Activated naive CD4-positive, alpha-beta T cell treated with anti-CD3 and anti-CD28 coated beads for 36 hours (primary cell): ENCODE measurements at regions of chr21 and their contacts with region 1.

Region 1: GRCh38 chr21:31558962-31559367 is 100.5 kb upstream of the SOD1 start:
- DNase-seq: peak; percentile 96
- H3K4me3 Mint-ChIP-seq: peak overlapping the region; percentile 89
- H3K27ac Mint-ChIP-seq: no peak overlapping the region
- H3K4me1 Mint-ChIP-seq: peaks cover 39% of the 10 kb centered on the region
- H3K27me3 Mint-ChIP-seq: peaks cover 23% of the 10 kb centered on the region

Region 2: DNA sequence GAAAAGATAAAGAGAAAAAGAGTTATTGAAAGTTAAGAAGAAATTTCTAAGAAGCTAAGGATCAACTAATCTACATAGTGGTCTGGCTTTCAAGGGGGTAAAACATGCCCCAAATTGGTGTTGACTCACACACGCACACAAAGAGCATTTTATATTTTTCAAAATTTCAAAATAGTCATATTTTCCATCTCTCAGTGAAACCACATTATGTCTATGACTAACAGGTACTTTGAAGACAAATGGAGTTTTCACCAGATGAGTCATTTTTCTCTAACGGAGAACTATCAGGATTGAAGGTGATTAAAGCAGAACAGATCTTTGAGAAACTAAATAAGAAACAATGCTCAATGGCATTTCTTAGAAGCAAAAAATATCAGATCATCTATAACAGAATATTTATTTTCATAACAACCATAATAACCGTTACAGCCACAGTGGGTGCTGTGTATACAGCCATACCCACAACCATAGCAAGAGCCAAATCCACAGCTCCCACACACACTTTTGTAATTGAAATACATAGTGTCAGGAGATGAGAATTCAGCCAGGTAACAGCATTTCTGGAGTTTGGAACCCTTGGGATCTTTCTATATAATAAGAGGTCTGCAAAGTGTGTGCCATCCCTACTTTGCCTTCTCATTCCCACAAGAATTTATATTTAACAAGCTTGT is 840.6 kb before region 1 on chr21 and contains the start of gene KRTAP21-3:
- CTCF ChIA-PET with region 1: no interaction called
- intact Hi-C with region 1: loop called (anchors 5 kb)
- DNase-seq: peak; percentile 33
- H3K4me3 Mint-ChIP-seq: no peak within 1 kb of the TSS
- H3K27ac Mint-ChIP-seq: peak within 1 kb of the TSS; percentile 46
- H3K4me1 Mint-ChIP-seq: peaks cover 21% of the 10 kb centered on the region
- H3K27me3 Mint-ChIP-seq: peaks cover 2% of the 10 kb centered on the region
- total RNA-seq, gene KRTAP21-3: not detected

Region 3: GRCh38 chr21:31198575-31198974 is 360.4 kb before region 1 on chr21:
- CTCF ChIA-PET with region 1: interaction called, 10 read pairs
- intact Hi-C with region 1: loop called (anchors 1 kb)
- DNase-seq: no peak
- H3K4me3 Mint-ChIP-seq: no peak overlapping the region
- H3K27ac Mint-ChIP-seq: no peak overlapping the region
- H3K4me1 Mint-ChIP-seq: peaks cover 51% of the 10 kb centered on the region
- H3K27me3 Mint-ChIP-seq: no peaks in the 10 kb centered on the region

Region 4: GRCh38 chr21:31293986-31294385 is 265.0 kb before region 1 on chr21:
- CTCF ChIA-PET with region 1: no interaction called
- intact Hi-C with region 1: loop called (anchors 1 kb)
- DNase-seq: peak; percentile 88
- H3K4me3 Mint-ChIP-seq: no peak overlapping the region
- H3K27ac Mint-ChIP-seq: peak overlapping the region; percentile 84
- H3K4me1 Mint-ChIP-seq: peaks cover 44% of the 10 kb centered on the region
- H3K27me3 Mint-ChIP-seq: no peaks in the 10 kb centered on the region

Region 5: DNA sequence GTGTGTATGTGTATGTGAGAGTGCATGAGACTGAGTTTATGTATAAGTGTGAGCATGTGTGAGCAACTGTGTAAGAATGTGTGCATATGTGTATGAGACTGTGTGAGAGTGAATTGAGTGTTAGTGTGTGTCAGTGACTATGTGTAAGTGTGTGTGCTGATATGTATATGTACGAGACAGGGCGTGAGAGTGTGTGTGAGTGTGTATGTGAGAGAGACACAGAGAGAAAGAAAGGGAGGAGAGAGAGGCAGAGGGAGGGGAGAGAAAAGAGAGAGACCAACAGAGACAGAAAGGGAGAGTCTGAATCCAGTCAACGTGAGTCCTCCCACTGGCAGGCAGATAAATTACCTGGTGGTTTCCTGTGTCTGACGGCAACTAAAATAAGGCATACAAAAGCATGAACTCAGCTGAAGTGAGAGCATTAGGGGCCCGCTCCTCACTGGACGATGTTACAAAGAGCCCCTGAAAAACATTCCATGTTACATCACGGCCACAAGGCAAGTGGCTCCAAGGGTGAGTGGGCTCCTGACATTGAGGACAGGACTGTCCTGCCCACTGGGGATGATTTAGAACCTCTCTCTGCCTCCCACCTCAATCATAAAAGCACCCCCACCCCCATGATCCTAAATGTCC is 148.3 kb before region 1 on chr21:
- CTCF ChIA-PET with region 1: no interaction called
- intact Hi-C with region 1: loop called (anchors 5 kb)
- DNase-seq: peak; percentile 62
- H3K4me3 Mint-ChIP-seq: no peak overlapping the region
- H3K27ac Mint-ChIP-seq: no peak overlapping the region
- H3K4me1 Mint-ChIP-seq: peaks cover 10% of the 10 kb centered on the region
- H3K27me3 Mint-ChIP-seq: no peaks in the 10 kb centered on the region

Region 6: GRCh38 chr21:31580866-31581276 is 21.9 kb after region 1 on chr21:
- CTCF ChIA-PET with region 1: interaction called, 21 read pairs
- intact Hi-C with region 1: no loop called
- DNase-seq: peak; percentile 88
- H3K4me3 Mint-ChIP-seq: no peak overlapping the region
- H3K27ac Mint-ChIP-seq: no peak overlapping the region
- H3K4me1 Mint-ChIP-seq: peaks cover 2% of the 10 kb centered on the region
- H3K27me3 Mint-ChIP-seq: no peaks in the 10 kb centered on the region

Region 7: GRCh38 chr21:31647650-31648049 is 88.7 kb after region 1 on chr21:
- CTCF ChIA-PET with region 1: no interaction called
- intact Hi-C with region 1: no loop called
- DNase-seq: no peak
- H3K4me3 Mint-ChIP-seq: no peak overlapping the region
- H3K27ac Mint-ChIP-seq: no peak overlapping the region
- H3K4me1 Mint-ChIP-seq: no peaks in the 10 kb centered on the region
- H3K27me3 Mint-ChIP-seq: no peaks in the 10 kb centered on the region

Region 8: GRCh38 chr21:31731802-31732596 is 173.0 kb after region 1 on chr21 and contains the start of gene SCAF4:
- CTCF ChIA-PET with region 1: no interaction called
- intact Hi-C with region 1: loop called (anchors 1 kb)
- DNase-seq: peak; percentile 75
- H3K4me3 Mint-ChIP-seq: peak within 1 kb of the TSS; percentile 83
- H3K27ac Mint-ChIP-seq: peak within 1 kb of the TSS; percentile 64
- H3K4me1 Mint-ChIP-seq: peaks cover 18% of the 10 kb centered on the region
- H3K27me3 Mint-ChIP-seq: no peaks in the 10 kb centered on the region
- total RNA-seq, gene SCAF4: 39.6 to 40.5 TPM

Region 9: DNA sequence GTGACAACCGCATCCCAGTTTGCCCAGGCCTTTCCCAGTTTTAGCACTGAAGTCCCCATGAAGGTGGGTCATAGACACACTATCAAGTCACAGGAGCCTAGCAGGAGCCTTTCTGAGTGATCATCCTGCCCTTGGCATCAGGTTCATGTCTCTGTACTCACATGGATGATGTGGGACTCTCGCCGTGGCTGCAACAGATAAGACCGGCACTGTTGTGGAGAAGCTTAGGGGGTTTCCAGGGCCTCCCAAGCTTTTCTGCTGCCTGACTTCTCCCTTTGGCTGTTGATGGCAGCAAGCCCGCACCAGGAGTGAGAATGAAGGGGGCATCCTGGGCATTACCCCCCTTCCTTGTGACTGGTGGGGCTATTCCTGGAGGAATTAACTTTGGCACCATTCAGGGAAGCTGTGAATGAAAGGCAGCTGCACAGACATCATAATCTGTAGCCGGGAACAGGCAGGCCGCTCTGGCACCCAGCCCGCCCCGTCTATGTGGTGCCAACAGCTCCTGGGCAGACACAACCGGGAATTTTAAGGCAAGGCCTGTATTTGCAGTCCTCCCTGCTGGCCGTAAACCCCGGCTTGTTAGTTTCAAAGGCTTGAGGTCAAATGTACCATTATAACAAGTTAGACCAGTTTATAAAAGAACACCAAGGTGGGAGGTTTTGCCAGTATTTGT is 462.5 kb after region 1 on chr21:
- CTCF ChIA-PET with region 1: no interaction called
- intact Hi-C with region 1: no loop called
- DNase-seq: no peak
- H3K4me3 Mint-ChIP-seq: no peak overlapping the region
- H3K27ac Mint-ChIP-seq: no peak overlapping the region
- H3K4me1 Mint-ChIP-seq: no peaks in the 10 kb centered on the region
- H3K27me3 Mint-ChIP-seq: no peaks in the 10 kb centered on the region